ENCODE measurements at regions of chr11 and their contacts with region 1.

Region 1: GRCh38 chr11:63478896-63479295 is 12.1 kb downstream of the PLAAT5 start:
- DNase-seq: peak; percentile 63 to 72 (median 67)
- H3K4me3 ChIP-seq: no peak overlapping the region
- H3K4me3 Mint-ChIP-seq: no peak overlapping the region
- H3K27ac ChIP-seq: no peak overlapping the region
- H3K27ac Mint-ChIP-seq: no peak overlapping the region
- H3K4me1 ChIP-seq: no peaks in the 10 kb centered on the region
- H3K4me1 Mint-ChIP-seq: no peaks in the 10 kb centered on the region
- H3K27me3 ChIP-seq: no peaks in the 10 kb centered on the region
- H3K27me3 Mint-ChIP-seq: peaks cover 2 to 6% of the 10 kb centered on the region in 2 donors

Region 2: DNA sequence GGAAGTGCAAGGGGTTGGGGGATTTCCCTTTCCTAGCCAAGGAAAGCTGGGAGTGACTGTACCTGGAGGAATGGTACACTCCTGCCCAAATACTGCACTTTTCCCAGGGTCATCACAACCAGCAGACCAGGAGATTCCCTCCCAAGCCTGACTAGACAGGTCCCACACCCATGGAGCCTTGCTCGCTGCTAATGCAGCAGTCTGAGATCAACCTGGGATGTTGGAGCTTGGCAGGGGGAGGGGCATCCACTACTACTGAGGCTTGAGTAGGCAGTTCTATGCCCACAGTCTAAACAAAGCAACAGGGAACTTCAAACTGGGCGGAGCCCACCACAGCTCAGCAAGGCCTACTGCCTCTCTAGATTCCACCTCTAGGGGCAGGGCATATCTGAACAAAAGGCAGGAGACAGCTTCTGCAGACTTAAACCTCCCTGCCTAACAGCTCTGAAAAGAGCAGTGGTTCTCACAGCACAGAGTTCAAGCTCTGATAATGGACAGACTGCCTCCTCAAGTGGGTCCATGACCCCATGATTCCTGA is 50.9 kb before region 1 on chr11:
- CTCF ChIA-PET with region 1: no interaction called
- POLR2A ChIA-PET with region 1: no interaction called
- intact Hi-C with region 1: no loop called
- DNase-seq: no peak
- H3K4me3 ChIP-seq: no peak overlapping the region
- H3K4me3 Mint-ChIP-seq: no peak overlapping the region
- H3K27ac ChIP-seq: no peak overlapping the region
- H3K27ac Mint-ChIP-seq: no peak overlapping the region
- H3K4me1 ChIP-seq: no peaks in the 10 kb centered on the region
- H3K4me1 Mint-ChIP-seq: no peaks in the 10 kb centered on the region
- H3K27me3 ChIP-seq: no peaks in the 10 kb centered on the region
- H3K27me3 Mint-ChIP-seq: peaks cover 22 to 31% of the 10 kb centered on the region in 2 donors

Region 3: DNA sequence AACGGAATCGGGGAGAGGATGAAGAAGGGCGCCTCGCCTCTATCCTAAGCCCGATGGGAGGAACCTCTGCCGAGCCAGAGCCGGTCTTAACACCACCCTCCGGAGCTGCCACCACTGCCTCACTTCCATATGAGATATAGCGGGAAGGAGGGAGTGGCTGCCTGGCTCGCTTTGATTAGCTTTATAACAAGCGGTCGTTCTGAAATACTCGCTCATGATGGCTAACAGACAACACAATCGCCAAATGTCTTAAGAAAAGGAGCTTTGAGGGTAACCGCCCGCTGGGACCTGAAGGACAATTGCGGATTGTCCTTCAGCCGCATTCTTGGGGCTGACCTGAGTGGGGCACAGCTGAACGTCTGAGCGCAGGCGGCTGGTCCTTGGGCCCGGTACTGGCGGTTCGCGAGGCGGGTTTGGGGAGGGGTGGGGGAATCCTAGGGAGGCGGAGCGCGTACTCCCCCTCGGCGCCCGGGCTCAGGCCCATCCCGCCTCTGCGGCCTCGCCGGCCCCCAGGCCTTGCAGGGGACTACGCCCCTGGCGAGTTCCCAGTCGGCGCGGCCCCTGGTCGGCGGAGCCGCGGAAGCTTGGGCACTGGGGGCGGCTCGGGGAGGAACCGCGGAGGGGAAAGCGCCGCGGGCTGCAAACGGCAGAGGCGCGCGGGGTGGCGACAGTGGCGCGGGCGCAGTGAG is 11.8 kb after region 1 on chr11 and contains the start of gene PLAAT5:
- CTCF ChIA-PET with region 1: interaction called, 48 read pairs
- POLR2A ChIA-PET with region 1: interaction called, 6 read pairs
- intact Hi-C with region 1: no loop called
- DNase-seq: peak in 3 of 5 donors; percentile 9 to 16 (median 16)
- H3K4me3 ChIP-seq: peak within 1 kb of the TSS in 1 of 2 donors; percentile 18
- H3K4me3 Mint-ChIP-seq: peak within 1 kb of the TSS; percentile 80 to 93 (median 86)
- H3K27ac ChIP-seq: no peak within 1 kb of the TSS
- H3K27ac Mint-ChIP-seq: peak within 1 kb of the TSS; percentile 32 to 89 (median 58)
- H3K4me1 ChIP-seq: peaks cover 13% of the 10 kb centered on the region
- H3K4me1 Mint-ChIP-seq: peaks cover 13 to 26% (median 17%) of the 10 kb centered on the region in 4 donors
- H3K27me3 ChIP-seq: no peaks in the 10 kb centered on the region
- H3K27me3 Mint-ChIP-seq: peaks cover 5 to 10% of the 10 kb centered on the region in 2 donors
- total RNA-seq, gene PLAAT5: not detected

Region 4: GRCh38 chr11:63536669-63537292 is 57.9 kb after region 1 on chr11 and contains the start of gene PLAAT4:
- CTCF ChIA-PET with region 1: interaction called, 14 read pairs
- POLR2A ChIA-PET with region 1: interaction called, 7 read pairs
- intact Hi-C with region 1: loop called (anchors 5 kb)
- DNase-seq: peak; percentile 54 to 69 (median 59)
- H3K4me3 ChIP-seq: peak within 1 kb of the TSS; percentile 83 to 89
- H3K4me3 Mint-ChIP-seq: peak within 1 kb of the TSS; percentile 95 to 99 (median 96)
- H3K27ac ChIP-seq: peak within 1 kb of the TSS; percentile 77
- H3K27ac Mint-ChIP-seq: peak within 1 kb of the TSS; percentile 96 to 99 (median 98)
- H3K4me1 ChIP-seq: peaks cover 93% of the 10 kb centered on the region
- H3K4me1 Mint-ChIP-seq: peaks cover 63 to 97% (median 82%) of the 10 kb centered on the region in 4 donors
- H3K27me3 ChIP-seq: no peaks in the 10 kb centered on the region
- H3K27me3 Mint-ChIP-seq: no peaks in the 10 kb centered on the region
- total RNA-seq, gene PLAAT4: 152 to 167 TPM

Region 5: GRCh38 chr11:63592975-63593395 is 114.1 kb after region 1 on chr11:
- CTCF ChIA-PET with region 1: interaction called, 10 read pairs
- POLR2A ChIA-PET with region 1: no interaction called
- intact Hi-C with region 1: no loop called
- DNase-seq: no peak
- H3K4me3 ChIP-seq: no peak overlapping the region
- H3K4me3 Mint-ChIP-seq: no peak overlapping the region
- H3K27ac ChIP-seq: no peak overlapping the region
- H3K27ac Mint-ChIP-seq: peak overlapping the region in 2 of 7 donors; percentile 75 to 78
- H3K4me1 ChIP-seq: no peaks in the 10 kb centered on the region
- H3K4me1 Mint-ChIP-seq: peaks cover 0 to 2% (median 0%) of the 10 kb centered on the region in 4 donors
- H3K27me3 ChIP-seq: no peaks in the 10 kb centered on the region
- H3K27me3 Mint-ChIP-seq: no peaks in the 10 kb centered on the region

Region 6: DNA sequence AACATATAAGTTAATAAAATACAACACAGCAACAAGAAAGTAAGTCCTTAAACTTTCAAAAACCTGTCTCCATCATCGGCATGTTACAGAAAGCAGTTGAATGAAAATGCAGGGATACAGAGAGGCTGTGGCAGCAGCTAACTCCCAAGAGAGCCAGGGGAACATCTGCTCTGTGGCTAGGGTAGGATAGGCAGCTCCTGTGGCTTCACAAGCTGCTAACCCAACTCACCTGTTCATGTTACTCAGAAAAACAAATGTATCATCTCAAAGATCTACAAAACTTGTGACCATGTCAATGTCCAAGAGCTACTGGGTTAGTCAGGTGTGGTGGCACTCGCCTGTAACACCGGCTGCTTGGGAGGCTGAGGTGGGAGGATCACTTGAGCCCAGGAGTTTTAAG is 150.5 kb after region 1 on chr11:
- CTCF ChIA-PET with region 1: interaction called, 29 read pairs
- POLR2A ChIA-PET with region 1: interaction called, 4 read pairs
- intact Hi-C with region 1: no loop called
- DNase-seq: no peak
- H3K4me3 ChIP-seq: no peak overlapping the region
- H3K4me3 Mint-ChIP-seq: no peak overlapping the region
- H3K27ac ChIP-seq: no peak overlapping the region
- H3K27ac Mint-ChIP-seq: peak overlapping the region in 2 of 7 donors; percentile 21 to 41
- H3K4me1 ChIP-seq: no peaks in the 10 kb centered on the region
- H3K4me1 Mint-ChIP-seq: peaks cover 0 to 1% (median 0%) of the 10 kb centered on the region in 4 donors
- H3K27me3 ChIP-seq: no peaks in the 10 kb centered on the region
- H3K27me3 Mint-ChIP-seq: no peaks in the 10 kb centered on the region

Region 7: GRCh38 chr11:63641727-63642126 is 162.8 kb after region 1 on chr11:
- CTCF ChIA-PET with region 1: interaction called, 191 read pairs
- POLR2A ChIA-PET with region 1: no interaction called
- intact Hi-C with region 1: loop called (anchors 1 kb)
- DNase-seq: no peak
- H3K4me3 ChIP-seq: no peak overlapping the region
- H3K4me3 Mint-ChIP-seq: no peak overlapping the region
- H3K27ac ChIP-seq: no peak overlapping the region
- H3K27ac Mint-ChIP-seq: peak overlapping the region in 3 of 7 donors; percentile 36 to 57 (median 55)
- H3K4me1 ChIP-seq: no peaks in the 10 kb centered on the region
- H3K4me1 Mint-ChIP-seq: peaks cover 7 to 19% (median 12%) of the 10 kb centered on the region in 4 donors
- H3K27me3 ChIP-seq: no peaks in the 10 kb centered on the region
- H3K27me3 Mint-ChIP-seq: no peaks in the 10 kb centered on the region

Region 8: GRCh38 chr11:63747011-63747410 is 268.1 kb after region 1 on chr11:
- CTCF ChIA-PET with region 1: no interaction called
- POLR2A ChIA-PET with region 1: no interaction called
- intact Hi-C with region 1: no loop called
- DNase-seq: no peak
- H3K4me3 ChIP-seq: no peak overlapping the region
- H3K4me3 Mint-ChIP-seq: no peak overlapping the region
- H3K27ac ChIP-seq: no peak overlapping the region
- H3K27ac Mint-ChIP-seq: no peak overlapping the region
- H3K4me1 ChIP-seq: no peaks in the 10 kb centered on the region
- H3K4me1 Mint-ChIP-seq: peaks cover 0 to 3% (median 0%) of the 10 kb centered on the region in 4 donors
- H3K27me3 ChIP-seq: no peaks in the 10 kb centered on the region
- H3K27me3 Mint-ChIP-seq: no peaks in the 10 kb centered on the region

Measured in CD4-positive, alpha-beta memory T cell (primary cell).